ENCODE measurements at regions of chr10 and their contacts with region 1.

Region 1: GRCh38 chr10:92124616-92125143 is 166.2 kb downstream of the CPEB3 start:
- DNase-seq: peak in 1 of 2 donors; percentile 22
- ATAC-seq: peak; percentile 38 to 72
- H3K4me3 ChIP-seq: no peak overlapping the region
- H3K27ac ChIP-seq: peak overlapping the region; percentile 32 to 72 (median 50)
- H3K4me1 ChIP-seq: peaks cover 50 to 51% of the 10 kb centered on the region in 2 donors
- H3K27me3 ChIP-seq: no peaks in the 10 kb centered on the region
- CTCF ChIP-seq: no peak
- POLR2A ChIP-seq: no peak

Region 2: GRCh38 chr10:92091965-92092364 is 32.7 kb before region 1 on chr10:
- in situ Hi-C with region 1: no loop called
- intact Hi-C with region 1: no loop called
- DNase-seq: no peak
- ATAC-seq: no peak
- H3K4me3 ChIP-seq: no peak overlapping the region
- H3K27ac ChIP-seq: peak overlapping the region in 1 of 4 donors; percentile 35
- H3K4me1 ChIP-seq: peaks cover 13 to 15% of the 10 kb centered on the region in 2 donors
- H3K27me3 ChIP-seq: no peaks in the 10 kb centered on the region
- CTCF ChIP-seq: no peak
- POLR2A ChIP-seq: no peak

Region 3: GRCh38 chr10:92177546-92177945 is 52.9 kb after region 1 on chr10:
- in situ Hi-C with region 1: loop called in 1 of 4 experiments (anchors 5 kb)
- intact Hi-C with region 1: no loop called
- DNase-seq: no peak
- ATAC-seq: no peak
- H3K4me3 ChIP-seq: no peak overlapping the region
- H3K27ac ChIP-seq: no peak overlapping the region
- H3K4me1 ChIP-seq: peaks cover 22 to 28% of the 10 kb centered on the region in 2 donors
- H3K27me3 ChIP-seq: no peaks in the 10 kb centered on the region
- CTCF ChIP-seq: no peak
- POLR2A ChIP-seq: no peak

Measured in gastrocnemius medialis (tissue), 4 donors.